CD14-positive monocyte (primary cell): ENCODE measurements at regions of chr10 and their contacts with region 1.

Region 1: DNA sequence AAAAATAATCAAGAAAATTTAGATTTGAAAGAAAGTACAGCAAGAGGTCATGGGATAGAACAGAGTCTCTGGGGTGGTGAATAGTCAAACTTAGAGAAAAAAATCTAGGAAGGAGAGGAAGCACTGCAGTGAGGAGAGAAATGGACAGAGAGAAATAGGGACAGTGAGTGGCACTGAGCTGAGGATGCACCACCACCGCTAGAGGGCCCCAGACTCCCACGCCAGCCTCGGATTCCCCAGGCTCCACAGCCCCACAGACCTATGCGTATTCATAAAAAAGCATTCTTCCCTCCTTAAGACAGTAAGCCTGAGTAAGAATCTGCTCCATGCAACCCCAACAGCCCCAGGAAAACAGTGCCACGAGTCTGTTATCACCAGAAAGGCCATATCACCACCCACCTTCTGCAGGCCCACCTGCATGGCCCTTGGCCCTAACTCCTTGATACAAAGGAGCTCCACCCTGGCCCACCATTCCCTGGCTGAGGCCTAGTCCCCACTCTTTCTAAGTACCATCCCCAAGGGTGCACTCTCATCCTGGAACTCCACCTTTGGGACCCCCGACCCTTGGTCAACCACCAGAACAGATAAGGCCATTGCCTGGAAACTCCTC is 91.0 kb downstream of the ALOX5 start:
- DNase-seq: peak; percentile 60 to 66 (median 63)
- H3K4me3 ChIP-seq: no peak overlapping the region
- H3K4me3 Mint-ChIP-seq: peak overlapping the region in 1 of 2 donors; percentile 52
- H3K27ac ChIP-seq: no peak overlapping the region
- H3K27ac Mint-ChIP-seq: peak overlapping the region in 4 of 7 donors; percentile 10 to 69 (median 31)
- H3K4me1 ChIP-seq: peaks cover 48 to 63% of the 10 kb centered on the region in 2 donors
- H3K4me1 Mint-ChIP-seq: peaks cover 63% of the 10 kb centered on the region
- H3K27me3 ChIP-seq: no peaks in the 10 kb centered on the region
- H3K27me3 Mint-ChIP-seq: peaks cover 2 to 4% (median 4%) of the 10 kb centered on the region in 3 donors
- CTCF ChIP-seq: peak; percentile 94

Region 2: GRCh38 chr10:45249978-45250693 is 214.9 kb before region 1 on chr10:
- intact Hi-C with region 1: loop called (anchors 5 to 10 kb)
- DNase-seq: peak; percentile 41 to 86 (median 53)
- H3K4me3 ChIP-seq: peak overlapping the region in 1 of 3 experiments; percentile 42
- H3K4me3 Mint-ChIP-seq: peak overlapping the region; percentile 48 to 77
- H3K27ac ChIP-seq: peak overlapping the region in 1 of 2 donors; percentile 36
- H3K27ac Mint-ChIP-seq: peak overlapping the region in 5 of 7 donors; percentile 37 to 75 (median 51)
- H3K4me1 ChIP-seq: peaks cover 13 to 14% of the 10 kb centered on the region in 2 donors
- H3K4me1 Mint-ChIP-seq: peaks cover 17% of the 10 kb centered on the region
- H3K27me3 ChIP-seq: no peaks in the 10 kb centered on the region
- H3K27me3 Mint-ChIP-seq: peaks cover 2 to 9% (median 6%) of the 10 kb centered on the region in 3 donors
- CTCF ChIP-seq: peak; percentile 81

Region 3: GRCh38 chr10:45373576-45374349 is 91.3 kb before region 1 on chr10 and contains the start of gene ALOX5:
- intact Hi-C with region 1: loop called in 1 of 2 experiments (anchors 10 kb)
- DNase-seq: peak; percentile 27 to 51 (median 50)
- H3K4me3 ChIP-seq: peak within 1 kb of the TSS; percentile 81 to 90 (median 88)
- H3K4me3 Mint-ChIP-seq: peak within 1 kb of the TSS; percentile 91 to 95
- H3K27ac ChIP-seq: peak within 1 kb of the TSS; percentile 79 to 92
- H3K27ac Mint-ChIP-seq: peak within 1 kb of the TSS; percentile 96 to 99 (median 99)
- H3K4me1 ChIP-seq: peaks cover 55 to 63% of the 10 kb centered on the region in 2 donors
- H3K4me1 Mint-ChIP-seq: peaks cover 62% of the 10 kb centered on the region
- H3K27me3 ChIP-seq: peaks cover 15 to 17% of the 10 kb centered on the region in 2 donors
- H3K27me3 Mint-ChIP-seq: peaks cover 18 to 21% (median 21%) of the 10 kb centered on the region in 3 donors
- CTCF ChIP-seq: no peak
- polyA plus RNA-seq, gene ALOX5: 223 to 918 (median 272) TPM

Region 4: GRCh38 chr10:45404087-45404769 is 60.8 kb before region 1 on chr10:
- intact Hi-C with region 1: loop called in 1 of 2 experiments (anchors 5 kb)
- DNase-seq: peak; percentile 84 to 93 (median 90)
- H3K4me3 ChIP-seq: peak overlapping the region in 1 of 3 experiments; percentile 44
- H3K4me3 Mint-ChIP-seq: peak overlapping the region in 1 of 2 donors; percentile 47
- H3K27ac ChIP-seq: peak overlapping the region; percentile 66 to 88
- H3K27ac Mint-ChIP-seq: peak overlapping the region; percentile 63 to 89 (median 87)
- H3K4me1 ChIP-seq: peaks cover 53 to 58% of the 10 kb centered on the region in 2 donors
- H3K4me1 Mint-ChIP-seq: peaks cover 78% of the 10 kb centered on the region
- H3K27me3 ChIP-seq: no peaks in the 10 kb centered on the region
- H3K27me3 Mint-ChIP-seq: peaks cover 0 to 2% (median 0%) of the 10 kb centered on the region in 3 donors
- CTCF ChIP-seq: no peak

Region 5: DNA sequence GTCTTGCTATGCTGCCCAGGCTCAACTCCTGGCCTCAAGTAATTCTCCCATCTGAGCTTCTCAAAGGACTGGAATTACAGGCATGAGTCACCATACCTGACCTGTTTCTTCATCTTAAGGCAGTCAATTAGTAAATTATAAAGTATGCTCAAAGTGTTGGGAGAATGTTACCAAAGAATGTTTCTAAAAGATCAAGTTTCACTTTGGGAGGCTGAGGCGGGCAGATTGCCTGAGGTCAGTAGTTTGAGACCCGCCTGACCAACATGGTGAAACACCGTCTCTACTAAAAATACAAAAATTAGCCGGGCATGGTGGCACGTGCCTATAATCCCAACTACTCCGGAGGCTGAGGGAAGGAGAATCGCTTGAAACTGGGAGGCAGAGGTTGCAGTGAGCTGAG is 26.0 kb after region 1 on chr10:
- intact Hi-C with region 1: no loop called
- DNase-seq: no peak
- H3K4me3 ChIP-seq: no peak overlapping the region
- H3K4me3 Mint-ChIP-seq: no peak overlapping the region
- H3K27ac ChIP-seq: no peak overlapping the region
- H3K27ac Mint-ChIP-seq: peak overlapping the region in 1 of 7 donors; percentile 17
- H3K4me1 ChIP-seq: no peaks in the 10 kb centered on the region
- H3K4me1 Mint-ChIP-seq: no peaks in the 10 kb centered on the region
- H3K27me3 ChIP-seq: no peaks in the 10 kb centered on the region
- H3K27me3 Mint-ChIP-seq: peaks cover 0 to 3% (median 1%) of the 10 kb centered on the region in 3 donors
- CTCF ChIP-seq: no peak

Region 6: DNA sequence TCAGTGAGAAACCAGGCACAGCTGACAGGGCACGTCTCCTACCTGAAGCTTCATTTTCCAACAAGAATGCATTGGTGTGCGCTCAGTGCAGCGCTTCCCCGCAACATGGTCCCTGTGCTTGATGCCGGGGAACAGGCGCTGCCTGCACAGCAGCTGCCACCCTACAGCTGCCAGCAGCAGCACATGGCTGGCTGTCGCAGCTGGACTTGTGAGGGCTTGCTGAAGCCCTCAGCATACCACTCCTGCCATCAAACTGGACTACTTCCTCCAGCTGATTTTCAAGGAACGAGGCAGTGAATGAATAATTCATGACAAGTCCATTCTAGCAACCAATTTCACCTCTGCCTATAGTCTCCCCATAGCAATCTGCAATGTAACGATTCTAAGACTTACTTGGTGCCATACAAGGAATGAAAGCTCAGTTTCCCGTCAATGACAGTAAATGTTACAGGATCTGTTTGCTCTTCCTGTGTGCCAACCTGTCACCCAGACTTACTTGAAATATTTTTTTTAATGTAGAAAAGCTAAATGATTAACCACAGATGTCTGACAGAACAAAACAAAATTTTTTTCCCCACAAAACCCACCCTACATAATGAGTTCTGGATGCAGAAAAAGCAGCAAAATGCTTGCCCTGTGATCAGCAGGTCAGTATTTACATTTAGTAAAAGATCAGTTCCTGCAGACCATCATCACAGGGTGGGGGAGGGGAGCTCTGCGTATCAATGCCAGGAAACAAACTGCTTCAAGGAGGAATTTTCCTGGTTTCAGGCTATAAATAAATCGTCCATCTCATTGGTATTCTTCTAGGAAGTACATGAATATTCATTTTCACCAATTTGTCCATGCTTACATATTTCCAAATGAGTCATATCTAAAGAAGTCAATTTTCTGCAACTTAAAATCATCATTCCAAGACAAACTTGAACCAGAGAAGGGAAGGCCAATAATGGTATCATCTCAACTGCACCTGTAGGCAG is 49.5 kb after region 1 on chr10:
- intact Hi-C with region 1: no loop called
- DNase-seq: no peak
- H3K4me3 ChIP-seq: no peak overlapping the region
- H3K4me3 Mint-ChIP-seq: no peak overlapping the region
- H3K27ac ChIP-seq: no peak overlapping the region
- H3K27ac Mint-ChIP-seq: peak overlapping the region in 1 of 7 donors; percentile 60
- H3K4me1 ChIP-seq: no peaks in the 10 kb centered on the region
- H3K4me1 Mint-ChIP-seq: peaks cover 3% of the 10 kb centered on the region
- H3K27me3 ChIP-seq: no peaks in the 10 kb centered on the region
- H3K27me3 Mint-ChIP-seq: no peaks in the 10 kb centered on the region
- CTCF ChIP-seq: no peak

Region 7: GRCh38 chr10:45594276-45595106 is 129.4 kb after region 1 on chr10:
- intact Hi-C with region 1: loop called in 1 of 2 experiments (anchors 10 kb)
- DNase-seq: peak; percentile 82 to 90 (median 89)
- H3K4me3 ChIP-seq: peak overlapping the region; percentile 72 to 95 (median 80)
- H3K4me3 Mint-ChIP-seq: peak overlapping the region; percentile 83 to 92
- H3K27ac ChIP-seq: peak overlapping the region in 1 of 2 donors; percentile 43
- H3K27ac Mint-ChIP-seq: peak overlapping the region in 6 of 7 donors; percentile 41 to 80 (median 71)
- H3K4me1 ChIP-seq: peaks cover 21 to 28% of the 10 kb centered on the region in 2 donors
- H3K4me1 Mint-ChIP-seq: peaks cover 30% of the 10 kb centered on the region
- H3K27me3 ChIP-seq: peaks cover 0 to under 1% of the 10 kb centered on the region in 2 donors
- H3K27me3 Mint-ChIP-seq: peaks cover 3 to 15% (median 11%) of the 10 kb centered on the region in 3 donors
- CTCF ChIP-seq: no peak

Region 8: DNA sequence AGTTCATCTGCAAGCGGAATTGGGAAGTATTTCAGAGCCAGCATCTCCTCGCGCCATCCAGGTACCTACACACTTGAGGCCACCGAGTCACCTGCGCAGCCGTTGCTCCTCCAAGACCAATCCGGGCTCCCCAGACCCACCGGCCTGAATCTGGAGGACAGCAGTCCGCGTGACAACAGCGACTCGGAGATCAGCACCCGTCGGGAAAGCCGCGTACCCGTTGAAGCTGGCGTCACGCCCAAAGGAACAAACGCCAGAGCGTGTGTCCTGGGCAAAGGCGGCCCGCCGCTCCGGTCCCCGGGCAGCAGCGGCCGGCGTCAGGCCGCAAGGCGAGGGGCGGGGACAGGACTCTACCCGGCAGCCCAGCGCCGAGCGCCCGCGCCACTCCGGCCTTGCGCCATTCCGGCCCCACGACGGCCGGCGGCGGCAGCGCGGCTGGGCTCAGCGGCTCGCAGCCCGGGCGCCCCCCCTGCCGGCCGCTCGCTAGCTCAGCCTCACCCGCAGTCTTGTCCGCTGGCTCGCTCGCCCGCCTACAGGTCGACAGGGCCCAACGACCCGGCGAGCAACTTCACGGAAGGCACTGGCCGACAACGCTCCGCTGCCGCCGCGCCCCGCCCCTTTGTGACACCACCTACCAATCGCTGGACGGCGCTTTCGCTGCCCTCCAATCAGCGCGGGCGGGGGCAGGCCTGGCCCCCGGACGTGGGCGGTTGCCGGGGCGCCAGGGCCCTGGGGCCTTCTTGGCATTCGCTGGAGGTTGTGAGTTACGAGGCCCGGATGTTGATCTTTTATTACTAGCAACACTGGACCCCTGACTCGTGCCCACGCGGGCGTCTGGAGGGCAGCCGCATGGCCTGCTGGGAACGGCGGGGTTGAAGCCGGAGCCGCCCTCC is 207.4 kb after region 1 on chr10 and contains the start of gene ZFAND4:
- intact Hi-C with region 1: loop called (anchors 5 to 10 kb)
- DNase-seq: peak; percentile 97 to 98 (median 98)
- H3K4me3 ChIP-seq: peak within 1 kb of the TSS; percentile 42 to 86 (median 76)
- H3K4me3 Mint-ChIP-seq: peak within 1 kb of the TSS; percentile 87 to 93
- H3K27ac ChIP-seq: peak within 1 kb of the TSS; percentile 88 to 93
- H3K27ac Mint-ChIP-seq: peak within 1 kb of the TSS; percentile 83 to 94 (median 93)
- H3K4me1 ChIP-seq: peaks cover 16 to 19% of the 10 kb centered on the region in 2 donors
- H3K4me1 Mint-ChIP-seq: peaks cover 20% of the 10 kb centered on the region
- H3K27me3 ChIP-seq: no peaks in the 10 kb centered on the region
- H3K27me3 Mint-ChIP-seq: peaks cover 0 to 2% (median 0%) of the 10 kb centered on the region in 3 donors
- CTCF ChIP-seq: peak; percentile 75
- polyA plus RNA-seq, gene ZFAND4: 4.4 to 5.9 (median 5.1) TPM